GM12878 (cell line): ENCODE measurements at regions of chr3 and their contacts with region 1.

Region 1: GRCh38 chr3:25782938-25783660 is at the start of gene NGLY1:
- DNase-seq: no peak
- ATAC-seq: peak; percentile 84
- H3K4me3 ChIP-seq: peak within 1 kb of the TSS; percentile 79
- H3K27ac ChIP-seq: peak within 1 kb of the TSS; percentile 86
- H3K4me1 ChIP-seq: peaks cover 10% of the 10 kb centered on the region
- H3K27me3 ChIP-seq: no peaks in the 10 kb centered on the region
- CTCF ChIP-seq: no peak
- EP300 ChIP-seq: no peak
- POLR2A ChIP-seq: peak; percentile 91
- RAD21 ChIP-seq: no peak
- polyA plus RNA-seq, gene NGLY1: 29.8 to 32.2 TPM

Region 2: DNA sequence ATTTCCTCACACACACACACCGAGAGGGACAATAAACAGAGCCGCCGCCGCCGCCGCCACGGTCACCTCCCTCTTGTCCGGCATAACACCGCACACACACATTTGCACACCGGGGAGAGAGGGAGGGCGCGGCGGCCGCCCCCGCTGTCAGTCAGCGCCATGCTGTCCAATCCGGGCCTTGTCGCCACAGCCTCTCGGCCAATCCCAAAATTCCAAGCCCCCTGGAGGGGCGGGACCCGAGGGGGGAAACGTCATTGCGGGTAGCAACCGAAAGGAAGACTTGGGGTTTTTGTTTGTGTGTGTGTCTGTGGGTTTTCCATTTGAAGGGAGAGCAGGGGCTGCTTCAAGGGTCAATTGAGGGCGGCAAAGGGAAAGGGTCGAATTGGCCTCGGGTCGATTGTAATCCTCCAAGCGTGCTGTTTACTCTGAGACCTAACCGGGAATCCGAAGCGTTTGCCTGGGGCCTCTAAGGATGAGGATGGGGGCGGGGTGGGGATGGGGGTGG is 118.2 kb before region 1 on chr3 and contains the start of gene TOP2B:
- CTCF ChIA-PET with region 1: interaction called, 7 read pairs
- POLR2A ChIA-PET with region 1: interaction called, 6 read pairs
- RAD21 ChIA-PET with region 1: interaction called, 7 read pairs
- SMC1A ChIA-PET with region 1: interaction called, 12 read pairs
- in situ Hi-C with region 1: loop called (anchors 5 kb)
- intact Hi-C with region 1: loop called (anchors 1 kb)
- DNase-seq: peak; percentile 81
- ATAC-seq: peak; percentile 90
- H3K4me3 ChIP-seq: peak within 1 kb of the TSS; percentile 72
- H3K27ac ChIP-seq: peak within 1 kb of the TSS; percentile 92
- H3K4me1 ChIP-seq: peaks cover 11% of the 10 kb centered on the region
- H3K27me3 ChIP-seq: no peaks in the 10 kb centered on the region
- CTCF ChIP-seq: no peak
- EP300 ChIP-seq: no peak; a peak in 3 of 4 replicates
- POLR2A ChIP-seq: peak; percentile 85
- RAD21 ChIP-seq: no peak
- polyA plus RNA-seq, gene TOP2B: 34.2 to 57.5 TPM

Region 3: DNA sequence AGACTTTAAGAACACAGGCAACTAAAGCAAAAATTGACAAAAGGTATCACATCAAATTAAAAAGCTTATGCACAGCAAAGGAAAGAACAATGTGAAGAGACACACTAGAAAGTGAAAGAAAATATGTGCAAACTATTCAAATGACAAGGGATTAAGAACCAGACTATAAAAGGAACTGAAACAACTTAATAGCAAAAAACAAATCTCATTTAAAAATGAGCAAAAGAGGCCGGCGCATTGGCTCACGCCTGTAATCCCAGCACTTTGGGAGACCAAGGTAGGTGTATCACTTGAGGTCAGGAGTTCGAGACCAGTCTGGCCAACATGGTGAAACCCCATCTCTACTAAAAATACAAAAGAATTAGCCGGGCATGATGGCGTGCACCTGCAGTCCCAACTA is 14.2 kb before region 1 on chr3:
- CTCF ChIA-PET with region 1: interaction called, 5 read pairs
- POLR2A ChIA-PET with region 1: interaction called, 7 read pairs
- RAD21 ChIA-PET with region 1: interaction called, 5 read pairs
- SMC1A ChIA-PET with region 1: interaction called, 6 read pairs
- in situ Hi-C with region 1: no loop called
- intact Hi-C with region 1: loop called (anchors 2 kb)
- DNase-seq: no peak
- ATAC-seq: peak; percentile 94
- H3K4me3 ChIP-seq: no peak overlapping the region
- H3K27ac ChIP-seq: no peak overlapping the region; the same call in 1 of the 2 replicates
- H3K4me1 ChIP-seq: peaks cover 10% of the 10 kb centered on the region
- H3K27me3 ChIP-seq: no peaks in the 10 kb centered on the region
- CTCF ChIP-seq: no peak
- EP300 ChIP-seq: peak; percentile 40 to 51; a peak in 2 of 4 replicates
- POLR2A ChIP-seq: no peak
- RAD21 ChIP-seq: no peak

Region 4: GRCh38 chr3:26273196-26273595 is 490.1 kb after region 1 on chr3:
- CTCF ChIA-PET with region 1: no interaction called
- POLR2A ChIA-PET with region 1: no interaction called
- RAD21 ChIA-PET with region 1: no interaction called
- SMC1A ChIA-PET with region 1: no interaction called
- in situ Hi-C with region 1: no loop called
- intact Hi-C with region 1: no loop called
- DNase-seq: no peak
- ATAC-seq: no peak
- H3K4me3 ChIP-seq: no peak overlapping the region
- H3K27ac ChIP-seq: no peak overlapping the region
- H3K4me1 ChIP-seq: no peaks in the 10 kb centered on the region
- H3K27me3 ChIP-seq: no peaks in the 10 kb centered on the region
- CTCF ChIP-seq: no peak
- EP300 ChIP-seq: no peak
- POLR2A ChIP-seq: no peak
- RAD21 ChIP-seq: no peak